GM12878 (cell line): ENCODE measurements at regions of chr2 and their contacts with region 1.

Region 1: DNA sequence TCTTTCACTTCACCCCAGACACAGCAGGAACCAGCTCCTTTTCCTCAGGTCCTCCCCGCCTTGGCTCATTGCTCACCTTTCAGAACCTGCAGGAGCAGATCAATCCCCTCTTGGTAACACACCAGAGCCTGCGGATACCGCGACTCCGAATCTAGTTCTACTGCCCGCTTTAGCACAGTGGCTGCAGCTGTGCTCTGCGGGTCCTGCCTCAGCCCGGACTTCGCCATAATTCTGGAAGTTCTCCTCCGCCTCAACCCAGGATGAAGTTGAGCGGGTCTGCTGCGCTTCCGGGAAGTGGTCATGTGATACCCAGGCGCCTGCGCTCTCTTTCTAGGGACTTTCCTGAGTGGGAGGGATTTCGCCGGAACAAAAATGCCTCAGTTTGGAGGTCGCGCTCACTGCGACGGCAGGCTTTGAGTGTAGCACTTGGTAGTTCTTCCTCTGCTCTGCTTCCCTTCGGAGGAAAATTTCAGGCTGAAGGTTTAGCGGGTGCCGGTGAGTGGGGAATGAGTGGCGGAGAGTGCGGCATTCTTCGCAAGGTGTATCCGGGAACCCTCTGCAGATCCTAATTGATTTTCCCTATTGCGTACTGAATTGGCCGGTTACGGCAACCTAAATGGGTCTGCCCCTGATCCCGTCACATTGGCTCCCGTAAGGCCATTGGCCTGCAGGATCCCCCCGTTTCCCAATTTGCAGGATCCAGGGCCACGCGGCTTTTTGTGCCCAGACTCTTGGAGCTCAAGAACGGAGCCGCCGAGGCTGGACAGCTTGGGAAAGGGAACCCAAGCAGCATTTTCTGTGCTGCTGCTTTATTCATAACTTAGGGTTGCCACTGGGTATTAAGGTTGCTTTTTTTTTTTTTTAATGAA is at the starts of genes MITD1 and MRPL30:
- DNase-seq: peak; percentile 95
- ATAC-seq: peak; percentile 92
- H3K4me3 ChIP-seq: peak within 1 kb of the TSS; percentile 95
- H3K27ac ChIP-seq: peak within 1 kb of the TSS; percentile 83
- H3K4me1 ChIP-seq: no peaks in the 10 kb centered on the region; the same call in 1 of the 2 replicates
- H3K27me3 ChIP-seq: no peaks in the 10 kb centered on the region
- CTCF ChIP-seq: no peak
- EP300 ChIP-seq: no peak
- POLR2A ChIP-seq: peak; percentile 93
- RAD21 ChIP-seq: no peak
- polyA plus RNA-seq, gene MITD1: 106 to 116 TPM
- polyA plus RNA-seq, gene MRPL30: 34.9 to 53.1 TPM

Region 2: GRCh38 chr2:99066075-99066958 is 114.7 kb before region 1 on chr2:
- CTCF ChIA-PET with region 1: no interaction called
- POLR2A ChIA-PET with region 1: no interaction called
- RAD21 ChIA-PET with region 1: interaction called, 4 read pairs
- SMC1A ChIA-PET with region 1: interaction called, 5 read pairs
- in situ Hi-C with region 1: no loop called
- intact Hi-C with region 1: loop called (anchors 2 kb)
- DNase-seq: peak; percentile 64
- ATAC-seq: peak; percentile 98
- H3K4me3 ChIP-seq: 0 out of 2 replicates have a peak overlapping the region, but pooled peaks have one; percentile 21
- H3K27ac ChIP-seq: peak overlapping the region; percentile 69
- H3K4me1 ChIP-seq: peaks cover 10% of the 10 kb centered on the region; the same call in 1 of the 2 replicates
- H3K27me3 ChIP-seq: no peaks in the 10 kb centered on the region
- CTCF ChIP-seq: peak; percentile 51 to 68 (median 61); a peak in 5 of 6 replicates
- EP300 ChIP-seq: no peak
- POLR2A ChIP-seq: no peak
- RAD21 ChIP-seq: peak; percentile 83

Region 3: DNA sequence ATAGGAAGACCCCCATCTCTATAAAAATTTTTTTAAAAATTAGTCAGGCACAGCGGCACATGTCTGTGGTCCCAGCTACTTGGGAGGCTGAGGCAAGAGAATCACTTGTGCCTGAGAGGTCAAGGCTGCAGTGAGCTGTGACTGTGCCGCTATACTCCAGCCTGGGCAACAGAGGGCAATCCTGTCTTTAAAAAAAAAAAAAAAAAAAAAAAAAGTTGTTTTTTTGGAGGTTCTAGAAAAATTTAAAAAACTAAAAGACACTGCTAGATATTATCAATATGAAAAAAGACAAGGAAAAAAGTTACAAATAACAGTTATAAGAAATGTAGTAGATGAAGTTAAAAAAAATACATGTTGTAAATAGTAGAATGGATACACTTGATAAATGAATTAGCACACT is 95.6 kb before region 1 on chr2:
- CTCF ChIA-PET with region 1: no interaction called
- POLR2A ChIA-PET with region 1: no interaction called
- RAD21 ChIA-PET with region 1: no interaction called
- SMC1A ChIA-PET with region 1: interaction called, 3 read pairs
- in situ Hi-C with region 1: no loop called
- intact Hi-C with region 1: loop called (anchors 5 kb)
- DNase-seq: no peak
- ATAC-seq: peak; percentile 60
- H3K4me3 ChIP-seq: no peak overlapping the region
- H3K27ac ChIP-seq: no peak overlapping the region
- H3K4me1 ChIP-seq: peaks cover 4% of the 10 kb centered on the region; the same call in 1 of the 2 replicates
- H3K27me3 ChIP-seq: no peaks in the 10 kb centered on the region
- CTCF ChIP-seq: peak; percentile 23 to 38 (median 27); a peak in 3 of 6 replicates
- EP300 ChIP-seq: no peak
- POLR2A ChIP-seq: no peak
- RAD21 ChIP-seq: peak; percentile 47

Region 4: GRCh38 chr2:99141110-99142108 is 39.6 kb before region 1 on chr2 and contains the start of gene C2orf15:
- CTCF ChIA-PET with region 1: interaction called, 11 read pairs
- POLR2A ChIA-PET with region 1: interaction called, 6 read pairs
- RAD21 ChIA-PET with region 1: interaction called, 13 read pairs
- SMC1A ChIA-PET with region 1: interaction called, 5 read pairs
- in situ Hi-C with region 1: no loop called
- intact Hi-C with region 1: loop called (anchors 5 kb)
- DNase-seq: peak; percentile 80
- ATAC-seq: peak; percentile 94
- H3K4me3 ChIP-seq: peak within 1 kb of the TSS; percentile 77
- H3K27ac ChIP-seq: peak within 1 kb of the TSS; percentile 55
- H3K4me1 ChIP-seq: peaks cover 10% of the 10 kb centered on the region
- H3K27me3 ChIP-seq: no peaks in the 10 kb centered on the region
- CTCF ChIP-seq: no peak
- EP300 ChIP-seq: no peak
- POLR2A ChIP-seq: peak; percentile 89
- RAD21 ChIP-seq: no peak
- polyA plus RNA-seq, gene C2orf15: 1.7 to 2.3 TPM

Region 5: DNA sequence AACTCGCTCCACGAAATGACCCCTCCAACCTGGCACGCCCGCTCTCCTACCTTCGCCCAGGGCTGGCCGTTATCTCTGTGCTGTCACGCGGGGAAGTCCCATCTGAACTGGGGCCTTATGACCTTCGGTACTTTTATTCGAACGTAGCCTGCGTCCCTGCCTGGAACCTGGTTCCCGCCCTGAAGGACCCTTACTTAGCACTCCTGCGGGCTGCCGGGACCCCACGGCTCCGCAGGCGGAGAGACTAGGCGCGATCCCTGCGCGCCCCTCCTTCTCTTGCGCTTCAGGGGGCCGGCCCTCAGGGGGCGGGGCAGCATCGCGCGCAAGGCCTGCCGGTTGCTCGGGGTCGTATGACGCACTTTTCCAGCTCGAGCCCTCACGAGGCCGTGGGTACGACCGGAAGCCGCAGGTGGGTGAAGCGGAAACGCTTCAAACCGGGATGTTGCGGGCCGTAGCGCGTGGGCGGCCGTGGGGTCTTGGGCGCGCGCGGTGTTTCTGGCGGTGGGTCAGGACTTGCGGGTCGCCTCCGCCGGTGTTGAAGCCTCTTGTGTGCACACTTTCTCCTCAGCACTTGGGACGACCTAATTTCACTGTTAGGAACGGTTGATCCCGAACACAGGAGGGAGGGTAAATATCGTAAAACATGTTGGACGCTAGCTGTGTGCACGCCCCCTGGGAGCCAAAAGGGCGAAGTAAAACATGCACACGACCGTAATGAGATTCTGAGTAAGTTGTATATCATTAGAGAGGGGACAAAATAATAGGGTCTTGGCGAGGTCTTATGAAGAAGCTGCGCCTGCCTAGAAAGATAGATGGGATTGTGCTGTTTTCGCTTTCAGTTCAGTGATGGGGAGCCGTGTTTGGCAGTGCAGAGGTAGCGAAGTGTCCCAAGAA is 26.1 kb before region 1 on chr2 and contains the starts of genes LIPT1 and TSGA10:
- CTCF ChIA-PET with region 1: interaction called, 14 read pairs
- POLR2A ChIA-PET with region 1: interaction called, 10 read pairs
- RAD21 ChIA-PET with region 1: interaction called, 9 read pairs
- SMC1A ChIA-PET with region 1: interaction called, 6 read pairs
- in situ Hi-C with region 1: no loop called
- intact Hi-C with region 1: no loop called
- DNase-seq: peak; percentile 69
- ATAC-seq: peak; percentile 94
- H3K4me3 ChIP-seq: peak within 1 kb of the TSS; percentile 78
- H3K27ac ChIP-seq: peak within 1 kb of the TSS; percentile 76
- H3K4me1 ChIP-seq: no peaks in the 10 kb centered on the region
- H3K27me3 ChIP-seq: no peaks in the 10 kb centered on the region
- CTCF ChIP-seq: no peak
- EP300 ChIP-seq: peak; percentile 32 to 55; a peak in 2 of 4 replicates
- POLR2A ChIP-seq: peak; percentile 97
- RAD21 ChIP-seq: no peak
- polyA plus RNA-seq, gene LIPT1: 14.4 to 15.3 TPM
- polyA plus RNA-seq, gene TSGA10: 10.2 to 11.6 TPM

Region 6: DNA sequence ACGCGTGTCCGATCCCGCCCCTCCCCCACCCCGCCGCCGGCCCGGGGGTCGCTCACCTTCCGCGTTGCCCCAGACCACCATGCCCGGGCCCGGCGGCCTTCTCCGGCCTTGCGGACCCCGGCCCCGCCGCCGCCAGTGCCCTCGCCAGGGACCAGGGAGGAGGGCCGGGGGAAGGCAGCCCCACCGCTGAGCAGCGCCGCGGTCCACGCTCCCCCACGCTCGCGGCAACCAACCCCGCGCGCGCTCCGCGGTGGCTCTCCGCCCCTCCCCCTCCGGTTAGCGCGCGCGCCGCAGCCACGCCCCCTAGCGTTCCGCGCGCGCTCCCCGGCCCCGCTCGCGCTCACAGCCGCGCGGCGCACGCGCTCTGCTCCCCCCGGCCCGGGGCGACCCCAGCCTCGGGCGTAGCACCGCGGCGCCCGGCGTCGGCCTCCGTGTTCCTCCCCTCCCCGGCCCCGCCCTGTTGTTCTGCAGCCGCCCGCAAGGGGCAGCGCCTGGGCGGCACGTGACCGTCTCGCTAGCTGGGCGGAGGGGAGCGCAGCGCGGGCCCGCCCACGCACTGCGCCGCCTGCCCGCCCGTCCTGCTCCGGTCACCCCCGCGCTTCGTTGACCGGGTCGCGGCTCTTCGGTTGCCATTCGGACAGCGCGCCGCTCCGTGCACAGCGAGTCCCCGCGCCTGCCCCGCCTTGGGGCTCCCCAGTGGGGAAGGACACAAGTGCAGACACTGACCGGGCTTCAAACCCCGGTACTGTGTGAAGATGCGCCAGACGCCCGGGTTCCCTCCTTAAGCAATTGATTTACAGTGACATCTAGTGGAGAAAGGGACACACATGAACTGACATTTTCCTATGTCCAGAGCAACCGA is 309.0 kb after region 1 on chr2 and contains the start of gene REV1:
- CTCF ChIA-PET with region 1: interaction called, 3 read pairs
- POLR2A ChIA-PET with region 1: no interaction called
- RAD21 ChIA-PET with region 1: no interaction called
- SMC1A ChIA-PET with region 1: no interaction called
- in situ Hi-C with region 1: loop called (anchors 25 kb)
- intact Hi-C with region 1: loop called (anchors 5 kb)
- DNase-seq: peak; percentile 72
- ATAC-seq: peak; percentile 89
- H3K4me3 ChIP-seq: peak within 1 kb of the TSS; percentile 79
- H3K27ac ChIP-seq: peak within 1 kb of the TSS; percentile 63
- H3K4me1 ChIP-seq: peaks cover 10% of the 10 kb centered on the region
- H3K27me3 ChIP-seq: no peaks in the 10 kb centered on the region
- CTCF ChIP-seq: peak; percentile 54 to 85 (median 65); a peak in 5 of 6 replicates
- EP300 ChIP-seq: no peak; a peak in 1 of 4 replicates
- POLR2A ChIP-seq: peak; percentile 86
- RAD21 ChIP-seq: peak; percentile 83
- polyA plus RNA-seq, gene REV1: 11.3 to 12.9 TPM